Activated T-helper 1 cell treated with anti-CD3 and anti-CD28 coated beads, Interleukin-12 subunit alpha, Interleukin-12 subunit beta, Interleukin-2, Interleukin-4 antibody, amounts not matched to agents 30 ng/mL and 10 ng/mL and 1 ng/mL, durations not matched to agents 14 hours and 24 hours and 36 hours (primary cell): ENCODE measurements at regions of chr12 and their contacts with region 1.

Region 1: DNA sequence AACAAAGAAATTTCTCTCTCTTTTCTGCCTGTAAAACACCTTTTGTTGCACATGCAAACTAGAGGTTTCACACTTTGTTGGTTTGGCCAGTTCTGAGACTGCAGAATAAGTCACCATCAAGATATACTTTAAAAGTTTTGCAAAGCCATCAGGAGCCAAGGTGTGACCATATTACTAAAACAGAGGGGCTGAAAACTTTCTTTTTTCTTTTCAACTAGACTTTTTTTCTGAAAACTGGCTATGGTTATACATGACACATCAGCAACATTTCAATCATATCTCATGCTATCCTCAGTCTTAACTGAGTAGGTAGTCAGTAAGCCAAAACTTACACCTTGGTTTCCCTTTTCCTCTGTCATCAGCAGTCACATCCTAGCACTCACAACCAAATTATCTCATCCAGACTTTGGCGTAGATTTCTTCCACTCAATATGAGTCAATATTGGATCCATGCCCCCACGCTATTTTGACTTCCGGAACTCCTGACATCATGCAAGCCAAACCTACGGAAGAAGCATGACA is 4.1 kb upstream of the IFNG start:
- DNase-seq: peak; percentile 34
- H3K4me3 Mint-ChIP-seq: peak overlapping the region; percentile 61
- H3K27ac Mint-ChIP-seq: peak overlapping the region; percentile 78
- H3K4me1 Mint-ChIP-seq: peaks cover 71% of the 10 kb centered on the region
- H3K27me3 Mint-ChIP-seq: no peaks in the 10 kb centered on the region

Region 2: GRCh38 chr12:67630373-67631088 is 533.1 kb before region 1 on chr12:
- intact Hi-C with region 1: loop called (anchors 5 kb)
- DNase-seq: peak; percentile 81
- H3K4me3 Mint-ChIP-seq: peak overlapping the region; percentile 37
- H3K27ac Mint-ChIP-seq: peak overlapping the region; percentile 89
- H3K4me1 Mint-ChIP-seq: peaks cover 62% of the 10 kb centered on the region
- H3K27me3 Mint-ChIP-seq: no peaks in the 10 kb centered on the region

Region 3: GRCh38 chr12:68175557-68176061 is 12.0 kb after region 1 on chr12:
- intact Hi-C with region 1: loop called (anchors 1 kb)
- DNase-seq: peak; percentile 81
- H3K4me3 Mint-ChIP-seq: peak overlapping the region; percentile 32
- H3K27ac Mint-ChIP-seq: peak overlapping the region; percentile 85
- H3K4me1 Mint-ChIP-seq: peaks cover 81% of the 10 kb centered on the region
- H3K27me3 Mint-ChIP-seq: no peaks in the 10 kb centered on the region

Region 4: DNA sequence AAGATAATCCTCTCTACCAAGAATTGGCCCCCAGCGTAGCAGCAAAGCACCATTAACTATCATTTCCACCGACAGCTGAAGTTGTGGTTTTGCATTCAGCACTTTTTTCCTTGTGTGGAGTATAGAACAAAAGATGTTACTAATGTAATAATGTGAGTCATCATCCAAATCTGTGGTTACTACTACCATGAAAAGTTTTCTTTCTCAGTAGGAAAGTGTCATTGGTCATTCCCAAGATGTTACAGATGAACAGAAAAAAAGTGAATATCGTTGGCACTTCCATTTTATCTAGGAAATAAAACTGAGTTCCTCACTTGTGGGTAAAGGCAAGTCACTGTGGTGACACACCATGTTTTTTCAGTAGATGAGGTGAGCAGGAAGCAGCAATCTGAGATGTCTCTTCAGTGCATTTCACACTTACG is 26.2 kb after region 1 on chr12:
- intact Hi-C with region 1: loop called (anchors 1 kb)
- DNase-seq: peak; percentile 41
- H3K4me3 Mint-ChIP-seq: peak overlapping the region; percentile 52
- H3K27ac Mint-ChIP-seq: peak overlapping the region; percentile 94
- H3K4me1 Mint-ChIP-seq: peaks cover 75% of the 10 kb centered on the region
- H3K27me3 Mint-ChIP-seq: no peaks in the 10 kb centered on the region

Region 5: DNA sequence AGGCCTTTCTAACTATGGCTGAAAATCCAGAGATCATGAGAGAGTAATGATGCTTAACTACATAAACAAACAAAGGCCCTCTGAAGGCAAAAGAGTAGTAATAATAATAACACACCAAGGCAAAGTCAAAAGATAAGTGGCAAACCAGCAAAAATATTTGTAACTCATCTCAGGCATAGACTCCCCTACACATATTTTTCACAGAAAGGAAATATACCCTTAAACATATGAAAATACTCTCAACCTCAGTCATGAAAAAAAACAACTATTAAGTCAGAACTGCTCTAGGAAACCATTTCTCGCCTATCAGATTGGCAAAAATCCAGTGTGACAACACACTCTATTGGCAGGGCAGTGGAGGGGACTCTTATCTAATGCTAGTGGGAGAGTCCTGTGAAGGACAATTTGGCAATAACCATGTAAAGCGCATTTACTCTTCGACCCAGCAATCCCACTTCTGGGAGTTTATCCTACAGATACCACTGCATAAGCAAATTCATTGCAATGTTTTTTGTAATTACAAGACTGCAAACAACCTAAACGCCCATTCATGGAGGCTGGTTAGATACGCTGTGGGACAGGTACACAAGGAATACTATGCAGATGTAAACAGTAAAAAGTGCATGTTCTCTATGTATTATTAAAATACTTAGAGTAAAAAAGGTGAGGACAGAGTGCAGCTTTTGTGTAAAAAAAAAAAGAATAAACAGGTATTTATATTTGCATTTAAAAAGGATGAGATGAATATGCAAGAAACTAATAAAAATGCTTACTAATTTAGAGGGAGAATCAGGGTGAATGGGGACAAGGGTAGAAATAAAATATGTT is 115.8 kb after region 1 on chr12:
- intact Hi-C with region 1: loop called (anchors 1 kb)
- DNase-seq: no peak
- H3K4me3 Mint-ChIP-seq: no peak overlapping the region
- H3K27ac Mint-ChIP-seq: peak overlapping the region; percentile 45
- H3K4me1 Mint-ChIP-seq: peaks cover 61% of the 10 kb centered on the region
- H3K27me3 Mint-ChIP-seq: no peaks in the 10 kb centered on the region

Region 6: DNA sequence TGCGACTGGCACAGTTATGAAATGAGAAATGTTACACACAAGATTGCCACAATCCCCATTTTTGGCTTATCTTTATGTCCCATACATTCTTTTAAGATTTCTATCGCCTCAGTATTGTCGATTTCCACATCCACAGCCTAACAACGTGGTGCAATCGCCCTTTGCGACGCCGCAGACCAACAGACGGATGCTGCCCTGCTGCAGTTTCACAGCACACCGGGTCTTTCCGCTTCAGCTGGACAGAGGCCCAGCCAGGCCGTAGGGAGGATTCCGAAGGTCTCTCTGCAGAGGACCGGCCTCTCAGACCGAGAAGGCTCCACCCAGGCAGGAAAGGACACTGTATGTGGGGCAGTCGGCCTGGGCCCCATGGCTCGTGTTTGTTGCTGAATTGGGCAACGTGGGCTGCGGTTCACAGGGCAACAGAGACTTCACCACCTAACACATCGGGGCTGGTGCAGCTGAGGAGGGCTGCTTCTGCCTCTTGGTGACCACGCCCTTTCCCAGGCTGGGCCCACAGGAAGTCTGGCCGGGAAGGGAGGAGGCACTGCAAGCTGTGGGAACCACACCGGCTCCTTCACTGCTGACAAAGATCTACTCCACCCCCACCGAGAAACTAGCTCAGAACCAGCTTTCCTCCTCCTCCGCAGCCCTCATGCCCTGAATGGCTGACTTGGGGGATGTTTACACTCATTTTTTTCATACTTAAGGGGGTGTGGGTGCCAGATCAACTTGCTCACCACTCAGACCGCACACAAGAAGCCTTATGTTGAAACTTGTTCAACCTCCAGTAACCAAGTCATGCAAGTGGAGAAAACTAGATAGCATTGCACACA is 201.5 kb after region 1 on chr12:
- intact Hi-C with region 1: loop called (anchors 2 kb)
- DNase-seq: peak; percentile 85
- H3K4me3 Mint-ChIP-seq: peak overlapping the region; percentile 77
- H3K27ac Mint-ChIP-seq: peak overlapping the region; percentile 92
- H3K4me1 Mint-ChIP-seq: peaks cover 76% of the 10 kb centered on the region
- H3K27me3 Mint-ChIP-seq: no peaks in the 10 kb centered on the region

Region 7: DNA sequence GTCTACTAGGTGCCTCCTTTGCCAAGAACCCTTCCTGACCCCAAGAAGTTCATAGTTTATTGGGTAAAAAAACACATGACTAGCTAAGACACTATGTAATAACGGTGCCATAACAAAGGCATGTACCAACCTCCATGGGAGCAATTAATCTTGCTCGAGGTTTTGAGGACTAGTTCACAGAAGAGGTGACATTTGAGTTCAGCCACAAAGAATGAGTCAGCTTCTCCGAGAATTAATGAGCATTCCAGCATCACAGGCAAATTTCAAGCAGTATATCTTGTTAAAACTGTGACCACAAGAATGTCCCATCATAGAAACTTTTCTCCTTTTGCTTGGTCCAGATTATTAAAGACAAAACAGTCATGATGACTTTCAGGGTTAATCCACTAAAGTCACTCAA is 334.1 kb after region 1 on chr12:
- intact Hi-C with region 1: loop called (anchors 5 kb)
- DNase-seq: no peak
- H3K4me3 Mint-ChIP-seq: peak overlapping the region; percentile 66
- H3K27ac Mint-ChIP-seq: peak overlapping the region; percentile 94
- H3K4me1 Mint-ChIP-seq: peaks cover 40% of the 10 kb centered on the region
- H3K27me3 Mint-ChIP-seq: no peaks in the 10 kb centered on the region

Region 8: DNA sequence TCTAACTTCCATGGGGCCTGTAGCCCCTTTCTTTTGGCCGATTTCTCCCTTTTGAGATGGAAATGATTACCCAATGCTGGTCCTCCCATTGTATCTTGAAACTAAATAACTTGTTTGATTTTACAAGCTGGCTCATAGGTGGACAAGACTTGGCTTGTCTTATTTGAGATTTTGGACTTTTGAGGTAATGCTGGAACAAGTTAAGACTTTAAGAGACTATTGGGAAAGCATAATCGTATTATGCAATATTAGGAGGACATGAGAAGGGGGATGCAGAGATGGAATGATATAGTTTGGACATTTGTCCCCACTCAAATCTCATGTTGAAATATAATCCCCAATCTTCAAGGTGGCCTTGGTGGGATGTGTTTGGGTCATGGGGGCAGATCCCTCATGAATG is 1135.3 kb after region 1 on chr12:
- intact Hi-C with region 1: no loop called
- DNase-seq: no peak
- H3K4me3 Mint-ChIP-seq: no peak overlapping the region
- H3K27ac Mint-ChIP-seq: no peak overlapping the region
- H3K4me1 Mint-ChIP-seq: no peaks in the 10 kb centered on the region
- H3K27me3 Mint-ChIP-seq: peaks cover 13% of the 10 kb centered on the region